ENCODE measurements at regions of chr14 and their contacts with region 1.

Region 1: GRCh38 chr14:94129111-94129757 is at the start of gene IFI27L2:
- DNase-seq: peak; percentile 81
- H3K4me3 ChIP-seq: peak within 1 kb of the TSS; percentile 49
- H3K27ac ChIP-seq: peak within 1 kb of the TSS; percentile 34
- H3K4me1 ChIP-seq: no peaks in the 10 kb centered on the region
- H3K27me3 ChIP-seq: no peaks in the 10 kb centered on the region
- CTCF ChIP-seq: no peak
- total RNA-seq, gene IFI27L2: 27.6 to 51.4 TPM

Region 2: DNA sequence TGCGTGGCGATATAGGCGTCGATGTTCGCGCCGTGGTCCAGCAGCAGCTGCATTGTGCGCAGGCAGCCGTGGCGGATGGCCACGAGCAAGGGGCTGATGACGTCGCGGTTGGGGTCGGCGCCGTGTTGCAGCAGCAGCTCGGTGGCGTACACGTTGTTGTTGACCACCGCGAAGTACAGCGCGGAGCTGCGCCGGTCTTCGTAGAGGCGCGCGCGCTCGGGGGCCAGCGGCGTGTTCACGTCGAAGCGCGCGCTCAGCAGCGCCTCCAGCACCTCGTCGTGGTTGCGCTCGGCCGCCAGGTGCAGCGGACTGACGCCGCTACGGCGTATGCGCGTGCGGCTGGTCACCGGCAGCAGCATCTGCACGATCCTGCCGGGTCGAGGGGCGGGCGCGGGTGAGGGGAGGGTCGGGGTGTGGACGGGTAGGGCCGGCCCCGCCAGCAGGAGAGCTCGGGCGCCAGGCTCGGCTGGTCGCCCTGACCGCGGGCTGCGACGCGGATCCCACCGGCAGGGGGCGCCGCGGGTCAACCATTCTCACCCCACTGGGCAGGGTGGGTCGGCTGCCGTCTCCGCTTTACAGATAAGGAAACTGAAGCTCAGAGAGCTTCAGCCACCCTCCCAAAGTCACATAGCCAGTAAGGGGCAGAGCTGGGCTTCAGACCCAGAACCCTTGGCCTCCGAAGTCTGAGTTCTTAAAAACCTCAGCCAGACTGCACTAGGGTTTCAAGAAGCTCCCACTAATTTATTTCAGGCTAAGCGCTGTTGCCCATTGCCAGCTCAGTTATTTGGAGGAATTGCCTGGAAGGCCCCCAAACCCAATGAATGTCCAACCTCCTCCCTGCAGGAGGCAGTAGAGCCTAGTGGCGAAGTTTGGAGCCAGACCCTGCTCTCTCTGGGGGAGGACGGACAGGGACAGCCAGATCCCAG is 189.7 kb before region 1 on chr14:
- intact Hi-C with region 1: loop called (anchors 10 kb)
- DNase-seq: peak; percentile 85
- H3K4me3 ChIP-seq: peak overlapping the region; percentile 26
- H3K27ac ChIP-seq: no peak overlapping the region
- H3K4me1 ChIP-seq: no peaks in the 10 kb centered on the region
- H3K27me3 ChIP-seq: no peaks in the 10 kb centered on the region
- CTCF ChIP-seq: peak; percentile 86

Region 3: DNA sequence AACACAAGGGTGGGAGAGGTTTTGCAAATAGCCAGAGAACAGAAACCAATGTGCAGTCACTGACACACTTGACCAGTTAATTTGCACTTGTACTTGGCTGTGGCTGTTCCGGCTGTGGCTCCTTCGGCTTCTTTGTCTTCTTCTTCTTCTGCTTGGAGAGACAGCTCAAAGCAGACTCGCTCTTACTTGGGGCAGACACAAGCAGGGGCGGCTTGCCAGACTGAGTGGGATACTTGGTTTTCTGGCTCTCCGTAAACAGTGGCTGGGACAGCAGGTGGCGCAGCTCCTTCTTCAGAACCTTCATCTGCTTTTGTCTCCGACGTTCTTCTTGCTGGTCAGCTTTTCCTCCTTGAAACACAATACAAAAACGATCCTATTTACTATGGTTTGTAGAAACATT is 78.1 kb before region 1 on chr14:
- intact Hi-C with region 1: loop called (anchors 2 kb)
- DNase-seq: peak; percentile 54
- H3K4me3 ChIP-seq: no peak overlapping the region
- H3K27ac ChIP-seq: no peak overlapping the region
- H3K4me1 ChIP-seq: no peaks in the 10 kb centered on the region
- H3K27me3 ChIP-seq: no peaks in the 10 kb centered on the region
- CTCF ChIP-seq: peak; percentile 38

Region 4: DNA sequence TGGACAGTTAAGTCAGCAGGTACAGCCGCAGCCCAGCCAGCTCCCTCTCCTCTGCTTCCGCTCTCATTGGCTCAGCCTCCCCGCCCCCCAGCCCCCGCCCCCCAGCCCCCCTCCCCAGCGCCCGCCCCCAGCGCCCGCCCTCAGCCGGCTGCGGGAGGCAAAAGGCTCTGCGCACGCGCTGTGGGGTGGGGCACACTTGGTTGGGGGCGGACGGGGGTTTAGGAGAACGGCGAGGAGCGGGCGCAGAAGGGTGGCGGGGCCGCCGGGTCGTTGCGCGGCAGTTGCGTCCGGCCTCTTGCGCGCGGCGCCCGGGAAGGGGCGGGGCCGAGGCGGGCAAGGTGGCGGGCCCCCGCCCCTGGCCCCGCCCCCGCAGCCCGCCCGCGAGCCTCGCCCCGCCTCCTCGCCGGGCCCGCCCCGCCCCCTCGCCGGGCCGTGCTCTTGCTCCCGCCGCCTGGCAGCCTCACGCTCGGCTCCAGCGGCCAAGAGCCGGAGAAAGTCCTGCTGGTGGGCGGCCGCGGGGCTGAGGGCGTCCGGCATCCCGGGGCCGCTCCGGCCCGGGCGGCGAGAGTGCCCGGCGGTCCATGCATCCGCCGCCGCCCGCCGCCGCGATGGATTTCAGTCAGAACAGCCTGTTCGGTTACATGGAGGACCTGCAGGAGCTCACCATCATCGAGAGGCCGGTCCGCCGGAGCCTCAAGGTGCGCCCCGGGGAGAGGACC is 44.8 kb after region 1 on chr14 and contains the start of gene PPP4R4:
- intact Hi-C with region 1: no loop called
- DNase-seq: peak; percentile 79
- H3K4me3 ChIP-seq: peak within 1 kb of the TSS; percentile 54
- H3K27ac ChIP-seq: no peak within 1 kb of the TSS
- H3K4me1 ChIP-seq: no peaks in the 10 kb centered on the region
- H3K27me3 ChIP-seq: peaks cover 27% of the 10 kb centered on the region
- CTCF ChIP-seq: no peak
- total RNA-seq, gene PPP4R4: 0.27 TPM in 1 of 2 donors, not detected in the other

Region 5: DNA sequence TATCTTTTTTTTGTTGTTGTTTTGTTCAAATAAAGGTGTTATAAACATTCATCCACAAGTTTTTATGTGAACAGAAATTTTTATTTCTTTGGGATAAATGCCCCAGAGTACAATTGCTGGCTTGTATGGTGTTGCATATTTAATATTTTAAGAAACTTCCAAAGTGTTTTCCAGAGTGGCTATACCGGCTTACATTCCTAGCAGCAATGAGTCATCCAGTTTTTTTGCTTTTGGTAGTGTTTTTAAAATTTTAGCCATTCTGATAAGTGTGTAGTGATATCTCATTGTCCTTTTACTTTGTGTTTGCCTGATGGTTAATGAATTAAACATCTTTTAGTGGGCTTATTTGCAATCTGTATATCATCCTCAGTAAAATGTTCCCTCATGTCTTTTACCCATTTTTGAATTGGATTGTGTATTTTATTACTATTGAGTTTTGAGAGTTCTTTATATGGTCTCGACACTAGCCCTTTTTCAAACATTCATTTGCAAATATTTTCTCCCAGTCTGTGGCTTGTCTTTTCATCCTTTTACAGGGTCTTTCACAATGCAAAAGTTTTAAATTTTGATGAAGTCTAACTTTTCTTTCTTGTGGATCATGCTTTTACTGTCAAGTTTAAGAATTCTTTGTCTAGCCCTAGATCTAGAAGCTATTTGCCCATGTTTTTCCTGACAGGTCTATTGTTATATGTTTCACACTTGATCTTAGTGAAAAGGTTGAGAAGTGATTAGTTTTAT is 74.4 kb after region 1 on chr14:
- intact Hi-C with region 1: no loop called
- DNase-seq: no peak
- H3K4me3 ChIP-seq: no peak overlapping the region
- H3K27ac ChIP-seq: no peak overlapping the region
- H3K4me1 ChIP-seq: no peaks in the 10 kb centered on the region
- H3K27me3 ChIP-seq: no peaks in the 10 kb centered on the region
- CTCF ChIP-seq: no peak